AG04450 (cell line): ENCODE measurements at regions of chr2 and their contacts with region 1.

Region 1: GRCh38 chr2:189412330-189412953 is 28.8 kb upstream of the WDR75 start:
- DNase-seq: peak; percentile 48
- H3K4me3 ChIP-seq: peak overlapping the region; percentile 23; the same call in 1 of the 2 replicates
- H3K27ac ChIP-seq: no peak overlapping the region
- H3K27me3 ChIP-seq: no peaks in the 10 kb centered on the region
- CTCF ChIP-seq: peak; percentile 67

Region 2: DNA sequence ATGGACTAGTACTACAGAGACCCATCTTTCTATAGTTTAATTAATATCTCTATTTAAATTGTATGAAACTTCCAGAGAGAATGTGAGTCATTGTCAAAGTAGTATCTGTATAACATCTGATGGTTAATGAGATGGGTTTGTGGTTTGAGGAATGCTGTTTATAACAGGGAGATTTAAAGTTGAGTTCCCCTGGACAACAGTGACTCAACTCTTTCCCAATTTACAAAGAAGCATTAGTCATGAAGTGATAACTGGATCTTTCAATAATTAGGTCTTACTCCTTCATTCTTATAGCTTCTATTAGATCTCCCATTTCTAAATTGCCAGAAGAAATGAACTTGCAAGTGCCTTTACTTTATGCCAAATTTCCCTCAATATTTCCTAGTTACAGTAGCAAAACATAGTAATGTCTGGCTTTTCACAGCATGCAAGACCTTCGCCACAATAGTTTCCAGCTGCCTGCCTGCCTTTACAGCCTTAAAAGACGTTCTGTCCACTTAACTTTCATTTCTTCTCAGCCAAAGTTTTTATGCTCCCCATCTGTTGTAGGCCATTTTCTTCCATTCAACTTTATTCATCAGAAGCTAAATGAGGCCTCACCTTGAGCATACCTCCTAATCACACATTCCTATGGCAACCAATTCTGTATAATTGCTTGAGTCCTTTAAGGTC is 18.9 kb before region 1 on chr2:
- CTCF ChIA-PET with region 1: interaction called, 5 read pairs
- POLR2A ChIA-PET with region 1: interaction called, 10 read pairs
- DNase-seq: peak; percentile 87
- H3K4me3 ChIP-seq: no peak overlapping the region
- H3K27ac ChIP-seq: peak overlapping the region; percentile 11
- H3K27me3 ChIP-seq: no peaks in the 10 kb centered on the region
- CTCF ChIP-seq: no peak

Region 3: DNA sequence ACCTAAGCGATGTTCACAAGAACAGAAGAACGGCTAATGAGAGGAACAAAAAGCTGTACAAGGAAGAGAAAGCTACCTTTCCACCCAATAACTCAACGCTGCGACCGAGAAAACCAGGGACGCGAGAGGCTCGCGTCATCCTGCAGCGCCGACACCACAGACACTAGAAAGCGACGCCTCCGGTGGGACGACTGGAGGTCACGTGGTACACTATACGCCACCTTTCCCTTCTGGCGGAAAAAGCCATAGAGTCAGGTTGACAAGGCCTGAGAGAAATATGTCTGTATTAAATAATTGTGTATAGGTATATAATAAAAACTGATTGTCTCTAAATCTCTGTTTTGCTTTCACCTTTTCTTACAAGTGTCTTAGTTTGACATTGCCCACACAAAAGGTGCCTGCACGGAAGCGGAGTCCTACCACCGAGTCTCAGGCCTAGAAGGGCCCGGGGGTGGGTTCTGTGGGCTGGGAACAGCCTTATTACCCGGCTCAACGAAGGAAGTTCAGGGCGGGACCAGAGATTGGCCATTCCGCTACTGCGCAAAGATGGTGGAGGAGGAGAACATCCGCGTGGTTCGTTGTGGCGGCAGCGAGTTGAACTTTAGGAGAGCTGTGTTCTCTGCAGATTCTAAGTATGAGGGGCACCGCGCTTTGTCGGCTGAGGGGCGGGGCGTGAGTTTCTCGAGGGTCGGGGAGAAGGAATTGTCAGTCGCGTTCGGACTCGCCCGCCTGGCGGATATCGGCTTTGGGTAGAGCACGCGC is 28.7 kb after region 1 on chr2 and contains the start of gene WDR75:
- CTCF ChIA-PET with region 1: no interaction called
- POLR2A ChIA-PET with region 1: no interaction called
- DNase-seq: peak; percentile 82
- H3K4me3 ChIP-seq: peak within 1 kb of the TSS; percentile 81
- H3K27ac ChIP-seq: peak within 1 kb of the TSS; percentile 87
- H3K27me3 ChIP-seq: no peaks in the 10 kb centered on the region
- CTCF ChIP-seq: no peak
- polyA plus RNA-seq, gene WDR75: 28.2 and 48.0 TPM in 2 replicates